MCF 10A (cell line): ENCODE measurements at regions of chr4 and their contacts with region 1.

Region 1: GRCh38 chr4:54139332-54139731 is 39.4 kb downstream of the GSX2 start:
- DNase-seq: no peak
- H3K4me3 Mint-ChIP-seq: no peak overlapping the region
- H3K27ac Mint-ChIP-seq: no peak overlapping the region
- H3K4me1 Mint-ChIP-seq: no peaks in the 10 kb centered on the region
- H3K27me3 Mint-ChIP-seq: no peaks in the 10 kb centered on the region
- CTCF ChIP-seq: no peak

Region 2: GRCh38 chr4:54109241-54110018 is 29.9 kb before region 1 on chr4:
- CTCF ChIA-PET with region 1: no interaction called
- POLR2A ChIA-PET with region 1: no interaction called
- intact Hi-C with region 1: no loop called
- DNase-seq: no peak
- H3K4me3 Mint-ChIP-seq: no peak overlapping the region
- H3K27ac Mint-ChIP-seq: no peak overlapping the region
- H3K4me1 Mint-ChIP-seq: peaks cover 7% of the 10 kb centered on the region
- H3K27me3 Mint-ChIP-seq: no peaks in the 10 kb centered on the region
- CTCF ChIP-seq: no peak

Region 3: GRCh38 chr4:54127660-54128059 is 11.7 kb before region 1 on chr4:
- CTCF ChIA-PET with region 1: interaction called, 3 read pairs
- POLR2A ChIA-PET with region 1: interaction called, 3 read pairs
- intact Hi-C with region 1: loop called (anchors 1 kb)
- DNase-seq: no peak
- H3K4me3 Mint-ChIP-seq: no peak overlapping the region
- H3K27ac Mint-ChIP-seq: no peak overlapping the region
- H3K4me1 Mint-ChIP-seq: no peaks in the 10 kb centered on the region
- H3K27me3 Mint-ChIP-seq: no peaks in the 10 kb centered on the region
- CTCF ChIP-seq: no peak

Region 4: GRCh38 chr4:54197926-54198325 is 58.6 kb after region 1 on chr4:
- CTCF ChIA-PET with region 1: no interaction called
- POLR2A ChIA-PET with region 1: no interaction called
- intact Hi-C with region 1: no loop called
- DNase-seq: no peak
- H3K4me3 Mint-ChIP-seq: no peak overlapping the region
- H3K27ac Mint-ChIP-seq: no peak overlapping the region
- H3K4me1 Mint-ChIP-seq: peaks cover 6% of the 10 kb centered on the region
- H3K27me3 Mint-ChIP-seq: no peaks in the 10 kb centered on the region
- CTCF ChIP-seq: no peak

Region 5: GRCh38 chr4:54213761-54214160 is 74.4 kb after region 1 on chr4:
- CTCF ChIA-PET with region 1: no interaction called
- POLR2A ChIA-PET with region 1: no interaction called
- intact Hi-C with region 1: no loop called
- DNase-seq: peak; percentile 49
- H3K4me3 Mint-ChIP-seq: no peak overlapping the region
- H3K27ac Mint-ChIP-seq: no peak overlapping the region
- H3K4me1 Mint-ChIP-seq: peaks cover 14% of the 10 kb centered on the region
- H3K27me3 Mint-ChIP-seq: no peaks in the 10 kb centered on the region
- CTCF ChIP-seq: no peak